ENCODE measurements at regions of chr12 and their contacts with region 1.

Region 1: DNA sequence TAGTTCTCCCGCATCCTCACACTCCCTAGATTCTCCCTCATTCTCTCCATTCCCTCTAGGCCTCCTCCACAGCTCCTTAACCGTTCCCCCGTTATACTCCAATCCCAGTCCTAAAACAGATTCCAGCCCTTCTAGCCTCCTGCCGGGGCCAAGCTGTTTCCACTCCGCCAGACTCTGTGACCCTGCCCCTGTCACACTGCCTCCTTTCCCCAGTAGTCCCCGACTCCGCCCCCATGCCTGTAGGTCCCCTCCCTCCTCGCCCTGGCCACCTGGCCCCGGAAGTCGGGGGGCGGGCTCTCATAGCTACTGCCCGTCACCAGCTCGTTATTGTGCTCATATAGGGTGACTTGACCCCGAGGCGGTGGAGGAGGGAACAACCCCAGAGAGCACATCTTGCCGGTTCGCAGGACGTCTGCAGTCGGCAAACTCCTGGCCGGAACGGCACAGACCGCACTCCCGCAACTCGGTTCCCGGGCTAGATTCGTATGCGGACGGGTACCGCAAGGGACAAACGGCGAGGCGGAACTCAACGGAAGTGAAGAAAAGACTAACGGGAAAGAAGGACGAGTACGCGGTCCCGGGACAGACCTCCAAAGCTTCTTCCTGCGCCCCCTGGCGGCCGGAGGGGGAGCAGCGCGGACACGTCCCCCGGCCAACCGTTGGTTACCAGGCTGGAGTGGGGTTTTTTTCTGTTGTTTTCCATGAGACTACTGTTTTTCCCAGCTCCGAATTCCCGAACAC is at the start of gene AAAS:
- DNase-seq: peak; percentile 94 to 99
- H3K4me3 ChIP-seq: peak within 1 kb of the TSS; percentile 96
- H3K4me1 ChIP-seq: peaks cover 18% of the 10 kb centered on the region
- H3K27me3 ChIP-seq: no peaks in the 10 kb centered on the region

Region 2: DNA sequence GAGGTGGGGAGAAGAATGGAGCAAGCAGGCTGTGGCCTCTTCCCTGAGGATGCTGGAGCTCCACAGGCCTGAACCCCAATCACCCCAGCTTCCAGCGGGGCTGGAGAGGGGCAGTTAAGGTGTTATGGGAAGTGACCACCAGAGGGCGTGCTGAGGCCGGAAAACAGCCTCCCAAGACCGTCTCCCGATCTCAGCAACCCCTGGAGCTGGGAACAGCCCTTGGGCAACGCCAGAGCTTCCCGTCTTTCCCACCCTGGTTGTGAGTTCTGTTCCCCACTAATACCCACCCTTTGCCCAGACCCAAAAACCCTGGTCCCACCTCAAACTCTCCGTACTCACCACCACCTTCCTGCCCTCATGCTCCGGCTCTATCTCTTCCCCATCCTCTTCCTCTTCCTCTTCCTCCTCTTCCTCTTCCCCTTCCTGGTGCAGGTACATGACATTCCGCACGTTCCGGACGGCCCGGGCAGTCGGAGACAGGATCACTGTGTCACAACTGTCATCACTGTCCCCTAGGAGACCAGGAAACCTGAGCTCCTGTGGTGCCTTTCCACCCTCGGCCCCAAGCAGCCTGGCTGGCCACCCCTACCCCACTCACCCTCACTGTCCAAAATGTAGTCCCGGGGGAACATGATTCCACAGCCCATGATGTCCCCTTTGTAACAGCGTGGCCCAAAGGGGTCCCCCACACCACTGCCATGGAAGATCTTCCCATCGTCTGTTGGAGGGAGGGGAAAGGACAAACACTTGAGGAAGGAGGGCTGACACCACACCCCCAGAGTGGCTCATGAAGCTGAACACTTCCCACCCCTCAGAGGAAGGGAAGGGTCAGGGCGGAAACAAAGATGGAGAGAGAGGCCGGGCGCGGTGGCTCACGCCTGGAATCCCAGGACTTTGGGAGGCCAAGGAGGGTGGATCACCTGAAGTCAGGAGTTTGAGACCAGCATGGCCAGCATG is 255.0 kb before region 1 on chr12:
- in situ Hi-C with region 1: no loop called
- DNase-seq: peak; percentile 67 to 88
- H3K4me3 ChIP-seq: no peak overlapping the region
- H3K4me1 ChIP-seq: no peaks in the 10 kb centered on the region
- H3K27me3 ChIP-seq: peaks cover 2% of the 10 kb centered on the region; the same call in 1 of the 2 replicates

Region 3: DNA sequence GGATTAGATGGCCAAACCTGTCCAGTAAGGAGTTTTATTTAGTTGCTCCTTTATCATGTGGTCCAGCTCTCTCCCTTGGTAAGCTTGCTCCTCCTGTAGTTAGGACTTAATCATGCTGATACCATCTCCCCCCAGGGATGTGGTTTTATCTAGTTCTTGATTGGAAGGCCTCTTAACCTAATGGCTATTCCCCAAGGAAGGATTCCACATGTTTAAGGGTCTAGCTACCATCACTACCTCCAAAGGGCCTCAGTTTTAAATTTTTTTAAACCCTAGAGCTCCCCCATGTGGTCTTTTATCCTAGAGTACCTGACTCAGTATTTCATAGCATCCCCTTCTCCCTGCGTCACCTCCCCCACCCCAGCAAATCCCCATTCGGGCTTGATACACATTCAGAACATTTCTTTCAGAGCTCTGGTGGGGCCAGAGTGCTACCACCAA is 155.5 kb after region 1 on chr12:
- in situ Hi-C with region 1: no loop called
- DNase-seq: peak in 1 of 2 experiments; percentile 41
- H3K4me3 ChIP-seq: no peak overlapping the region
- H3K4me1 ChIP-seq: peaks cover 20% of the 10 kb centered on the region
- H3K27me3 ChIP-seq: no peaks in the 10 kb centered on the region

Region 4: GRCh38 chr12:53500776-53501614 is 179.8 kb after region 1 on chr12 and contains the start of gene TARBP2:
- in situ Hi-C with region 1: loop called (anchors 10 kb)
- DNase-seq: peak; percentile 98
- H3K4me3 ChIP-seq: peak within 1 kb of the TSS; percentile 66
- H3K4me1 ChIP-seq: peaks cover 18% of the 10 kb centered on the region
- H3K27me3 ChIP-seq: no peaks in the 10 kb centered on the region